CD4-positive, alpha-beta memory T cell (primary cell): ENCODE measurements at regions of chr18 and their contacts with region 1.

Region 1: DNA sequence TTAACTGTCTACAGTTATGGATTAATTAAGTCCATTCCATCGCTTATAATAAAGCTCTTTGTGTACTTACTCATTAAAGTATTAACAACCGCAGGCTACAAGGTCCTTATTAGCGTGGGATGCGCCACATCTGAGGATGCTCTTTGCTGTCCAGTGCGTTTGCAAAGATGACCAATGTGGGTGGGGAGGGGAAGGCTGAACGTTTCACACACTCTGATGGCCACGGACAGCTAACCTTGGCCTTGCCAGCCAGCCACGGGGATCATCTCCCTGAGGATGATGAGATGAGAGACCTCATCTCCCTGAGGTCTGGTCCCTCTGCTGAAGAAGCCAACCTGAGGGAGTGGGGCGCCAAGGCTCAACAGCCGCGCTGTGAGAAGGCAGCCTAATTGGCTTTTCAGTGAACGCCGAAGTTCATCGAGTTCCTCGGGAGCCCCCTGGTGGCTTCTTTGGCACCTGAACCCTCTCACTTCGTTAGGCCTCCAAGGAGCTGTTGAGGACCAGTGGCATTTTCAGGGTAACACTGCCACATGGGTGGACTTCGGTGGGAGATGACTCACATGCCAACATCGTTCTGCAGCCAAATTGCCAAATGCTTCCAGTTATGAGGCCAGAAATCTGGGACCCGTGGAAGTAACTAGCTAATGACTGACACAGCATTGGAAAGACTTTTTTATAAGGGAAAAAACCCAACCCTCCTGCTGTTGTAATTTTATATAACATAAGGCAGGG is 69.3 kb upstream of the SEC11C start:
- DNase-seq: peak; percentile 60 to 70 (median 61)
- H3K4me3 ChIP-seq: no peak overlapping the region
- H3K4me3 Mint-ChIP-seq: no peak overlapping the region
- H3K27ac ChIP-seq: no peak overlapping the region
- H3K27ac Mint-ChIP-seq: no peak overlapping the region
- H3K4me1 ChIP-seq: no peaks in the 10 kb centered on the region
- H3K4me1 Mint-ChIP-seq: peaks cover 0 to 1% (median 0%) of the 10 kb centered on the region in 4 donors
- H3K27me3 ChIP-seq: no peaks in the 10 kb centered on the region
- H3K27me3 Mint-ChIP-seq: peaks cover 0 to 1% of the 10 kb centered on the region in 2 donors

Region 2: GRCh38 chr18:58781627-58782194 is 288.6 kb before region 1 on chr18:
- CTCF ChIA-PET with region 1: interaction called, 293 read pairs
- POLR2A ChIA-PET with region 1: no interaction called
- intact Hi-C with region 1: loop called (anchors 1 kb)
- DNase-seq: peak; percentile 57 to 63 (median 62)
- H3K4me3 ChIP-seq: no peak overlapping the region
- H3K4me3 Mint-ChIP-seq: no peak overlapping the region
- H3K27ac ChIP-seq: no peak overlapping the region
- H3K27ac Mint-ChIP-seq: no peak overlapping the region
- H3K4me1 ChIP-seq: no peaks in the 10 kb centered on the region
- H3K4me1 Mint-ChIP-seq: peaks cover 0 to 6% (median 3%) of the 10 kb centered on the region in 4 donors
- H3K27me3 ChIP-seq: no peaks in the 10 kb centered on the region
- H3K27me3 Mint-ChIP-seq: peaks cover 5 to 12% of the 10 kb centered on the region in 2 donors

Region 3: DNA sequence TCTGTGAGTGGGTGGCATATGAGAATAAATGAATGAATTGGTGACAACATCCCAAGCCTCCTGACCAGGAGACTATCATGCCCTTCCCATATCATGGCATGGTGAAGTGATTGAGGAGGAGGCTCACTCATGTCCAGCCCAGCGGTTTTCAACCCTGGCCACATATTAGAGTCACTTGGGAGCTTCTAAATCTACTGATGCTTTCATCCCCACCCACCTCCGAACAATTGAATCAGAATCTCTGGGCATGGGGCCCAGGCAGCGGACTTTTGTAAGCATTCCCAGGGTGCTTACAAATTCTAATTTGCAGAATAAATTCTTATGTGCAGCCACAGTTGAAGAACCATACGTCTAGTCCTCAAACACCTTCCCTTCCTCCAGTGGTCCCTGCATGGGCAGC is 12.4 kb before region 1 on chr18:
- CTCF ChIA-PET with region 1: interaction called, 17 read pairs
- POLR2A ChIA-PET with region 1: no interaction called
- intact Hi-C with region 1: no loop called
- DNase-seq: no peak
- H3K4me3 ChIP-seq: no peak overlapping the region
- H3K4me3 Mint-ChIP-seq: no peak overlapping the region
- H3K27ac ChIP-seq: no peak overlapping the region
- H3K27ac Mint-ChIP-seq: no peak overlapping the region
- H3K4me1 ChIP-seq: no peaks in the 10 kb centered on the region
- H3K4me1 Mint-ChIP-seq: no peaks in the 10 kb centered on the region
- H3K27me3 ChIP-seq: peaks cover 6% of the 10 kb centered on the region
- H3K27me3 Mint-ChIP-seq: peaks cover 11 to 16% of the 10 kb centered on the region in 2 donors

Region 4: GRCh38 chr18:59478591-59478990 is 408.2 kb after region 1 on chr18:
- CTCF ChIA-PET with region 1: no interaction called
- POLR2A ChIA-PET with region 1: no interaction called
- intact Hi-C with region 1: no loop called
- DNase-seq: no peak
- H3K4me3 ChIP-seq: no peak overlapping the region
- H3K4me3 Mint-ChIP-seq: no peak overlapping the region
- H3K27ac ChIP-seq: no peak overlapping the region
- H3K27ac Mint-ChIP-seq: no peak overlapping the region
- H3K4me1 ChIP-seq: no peaks in the 10 kb centered on the region
- H3K4me1 Mint-ChIP-seq: no peaks in the 10 kb centered on the region
- H3K27me3 ChIP-seq: no peaks in the 10 kb centered on the region
- H3K27me3 Mint-ChIP-seq: peaks cover 14 to 20% of the 10 kb centered on the region in 2 donors